ENCODE measurements at regions of chr21 and their contacts with region 1.

Region 1: DNA sequence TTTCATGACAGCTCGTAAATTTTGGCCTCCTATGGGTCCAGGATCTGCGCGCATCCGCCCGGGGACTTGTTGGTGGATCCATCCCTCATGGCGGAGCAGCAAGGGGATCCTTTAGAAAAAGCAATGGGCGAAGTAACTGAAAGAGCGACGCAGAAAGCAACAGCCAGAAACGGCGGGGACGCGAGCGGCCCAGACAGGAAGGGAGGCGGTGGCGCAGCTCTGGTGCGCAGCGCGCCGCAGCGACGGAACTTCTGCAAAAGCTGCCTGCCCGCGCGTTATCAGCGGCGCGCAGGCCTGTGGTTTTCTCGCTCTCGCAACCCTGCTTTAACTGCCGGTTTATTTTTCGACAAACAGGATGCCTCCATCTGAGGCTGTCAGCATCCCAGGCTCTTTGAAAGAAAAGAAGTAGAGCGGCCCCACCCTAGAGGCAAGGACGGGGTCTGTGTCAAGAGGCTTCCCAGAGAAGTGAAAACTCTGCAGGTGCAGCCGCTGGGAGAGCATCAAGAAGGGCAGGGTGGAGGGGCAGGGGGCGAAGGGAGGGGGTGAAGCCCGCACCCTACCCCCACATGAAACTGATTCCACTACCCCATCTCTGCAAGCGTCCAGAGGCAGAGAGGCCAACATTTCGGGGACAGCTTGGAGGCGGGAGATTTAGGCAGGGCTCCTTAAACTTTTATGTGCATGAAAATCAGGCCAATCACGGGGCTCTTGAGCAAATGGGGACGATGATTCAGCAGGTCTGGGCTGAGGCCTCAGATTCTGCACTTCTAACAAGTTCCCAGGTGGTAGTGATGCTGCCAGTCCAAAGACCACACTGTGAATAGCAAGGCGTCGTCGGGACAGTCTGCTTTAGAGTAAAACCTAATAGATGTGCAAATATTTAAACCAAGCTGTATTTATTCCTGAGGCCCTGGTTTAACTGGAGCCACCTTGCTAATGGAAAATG is 22.2 kb downstream of the RUNX1 start:
- DNase-seq: peak; percentile 75 to 96 (median 88)
- ATAC-seq: peak; percentile 83
- H3K4me3 ChIP-seq: peak overlapping the region; percentile 32 to 39
- H3K4me3 Mint-ChIP-seq: peak overlapping the region; percentile 77
- H3K27ac ChIP-seq: peak overlapping the region; percentile 74 to 77
- H3K27ac Mint-ChIP-seq: peak overlapping the region; percentile 97
- H3K4me1 ChIP-seq: peaks cover 80% of the 10 kb centered on the region
- H3K4me1 Mint-ChIP-seq: peaks cover 89% of the 10 kb centered on the region
- H3K27me3 ChIP-seq: no peaks in the 10 kb centered on the region
- H3K27me3 Mint-ChIP-seq: no peaks in the 10 kb centered on the region
- CTCF ChIP-seq: no peak

Region 2: DNA sequence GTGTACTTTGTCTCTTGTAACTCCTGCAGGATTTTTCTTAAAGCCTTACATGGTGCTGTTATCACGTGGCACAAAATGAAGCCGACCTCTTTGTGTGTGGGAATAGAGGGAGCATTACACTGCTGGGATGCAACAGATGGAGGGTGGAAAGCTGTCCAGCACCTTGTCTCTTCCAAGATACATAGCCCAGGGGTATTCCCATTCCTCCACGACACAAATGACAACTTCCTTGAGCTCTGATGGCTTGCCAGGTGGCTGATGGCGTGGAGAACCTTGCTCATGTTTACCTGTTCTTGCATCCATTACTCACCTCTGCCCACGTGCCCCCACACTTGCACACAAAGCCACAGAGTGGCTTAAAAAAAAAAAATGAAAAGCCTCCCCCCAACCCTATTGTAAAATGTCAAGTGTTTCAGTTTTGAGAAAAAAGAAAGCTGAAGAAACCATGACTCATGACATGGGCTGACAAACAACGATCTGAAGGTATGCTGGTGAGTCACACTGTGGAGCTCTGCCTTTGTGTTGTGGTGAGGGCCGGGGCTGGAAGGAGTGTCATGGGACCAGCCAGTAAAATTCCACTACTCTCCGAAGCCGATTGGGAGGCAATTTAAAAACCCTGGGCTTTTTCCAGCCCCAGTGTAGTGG is 1079.3 kb before region 1 on chr21:
- CTCF ChIA-PET with region 1: no interaction called
- POLR2A ChIA-PET with region 1: no interaction called
- intact Hi-C with region 1: loop called in 1 of 2 experiments (anchors 5 kb)
- DNase-seq: peak; percentile 64 to 97 (median 82)
- ATAC-seq: peak; percentile 56
- H3K4me3 ChIP-seq: peak overlapping the region; percentile 18 to 25
- H3K4me3 Mint-ChIP-seq: peak overlapping the region; percentile 75
- H3K27ac ChIP-seq: peak overlapping the region; percentile 94 to 95
- H3K27ac Mint-ChIP-seq: peak overlapping the region; percentile 99
- H3K4me1 ChIP-seq: peaks cover 66% of the 10 kb centered on the region
- H3K4me1 Mint-ChIP-seq: peaks cover 78% of the 10 kb centered on the region
- H3K27me3 ChIP-seq: no peaks in the 10 kb centered on the region
- H3K27me3 Mint-ChIP-seq: no peaks in the 10 kb centered on the region
- CTCF ChIP-seq: no peak

Region 3: DNA sequence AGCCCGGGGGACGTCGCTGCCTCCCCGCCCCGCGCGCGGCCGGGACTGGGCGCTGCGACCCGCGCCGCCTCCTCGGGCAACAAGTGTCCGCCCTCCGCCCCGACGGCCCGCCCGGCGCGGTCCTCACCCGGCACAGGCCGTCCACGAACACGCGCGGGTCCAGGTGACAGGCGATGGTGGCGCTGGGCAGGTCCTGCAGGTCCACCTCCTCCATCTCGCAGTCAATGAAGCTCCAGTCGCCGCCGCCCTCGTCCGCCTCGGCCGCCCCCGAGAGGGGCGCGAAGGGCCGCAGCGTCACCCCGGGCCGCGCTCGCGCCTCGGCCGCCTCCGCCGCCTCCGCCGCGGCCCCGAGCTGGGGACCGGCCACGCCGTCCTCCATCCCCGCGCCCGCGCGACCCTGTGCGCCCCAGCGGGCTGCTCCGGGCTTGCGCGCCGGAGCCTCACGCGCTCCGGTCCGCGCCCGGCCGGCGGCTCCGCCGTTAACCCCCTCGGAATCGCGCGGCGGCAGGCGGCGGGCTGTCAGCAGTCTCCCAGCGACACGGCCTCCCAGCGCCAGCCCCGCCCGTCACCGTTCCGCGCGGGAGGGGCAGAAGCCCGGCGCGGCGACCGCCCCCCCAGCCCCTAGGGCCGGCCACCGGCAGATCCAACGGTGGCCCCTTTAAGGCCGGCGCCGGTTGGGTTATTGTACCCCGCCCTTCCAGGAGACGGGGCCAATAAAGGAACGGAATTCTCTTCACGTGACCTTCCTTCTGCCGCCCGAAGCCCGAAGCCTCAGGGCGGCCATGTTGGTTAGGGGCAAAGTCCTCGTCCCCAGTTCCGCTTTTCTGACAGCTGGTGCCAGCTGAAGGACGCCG is 412.0 kb before region 1 on chr21 and contains the start of gene RCAN1:
- CTCF ChIA-PET with region 1: no interaction called
- POLR2A ChIA-PET with region 1: no interaction called
- intact Hi-C with region 1: loop called in 1 of 2 experiments (anchors 10 kb)
- DNase-seq: peak; percentile 64 to 94 (median 85)
- ATAC-seq: peak; percentile 95
- H3K4me3 ChIP-seq: peak within 1 kb of the TSS; percentile 51 to 63
- H3K4me3 Mint-ChIP-seq: peak within 1 kb of the TSS; percentile 90
- H3K27ac ChIP-seq: peak within 1 kb of the TSS; percentile 41 to 68
- H3K27ac Mint-ChIP-seq: peak within 1 kb of the TSS; percentile 91
- H3K4me1 ChIP-seq: peaks cover 13% of the 10 kb centered on the region
- H3K4me1 Mint-ChIP-seq: peaks cover 21% of the 10 kb centered on the region
- H3K27me3 ChIP-seq: no peaks in the 10 kb centered on the region
- H3K27me3 Mint-ChIP-seq: no peaks in the 10 kb centered on the region
- CTCF ChIP-seq: no peak
- total RNA-seq, gene RCAN1: 0.73 to 1.0 TPM

Region 4: GRCh38 chr21:34986561-34987500 is 40.1 kb before region 1 on chr21:
- CTCF ChIA-PET with region 1: interaction called, 3 read pairs
- POLR2A ChIA-PET with region 1: interaction called, 12 read pairs
- intact Hi-C with region 1: loop called (anchors 1 to 2 kb)
- DNase-seq: peak; percentile 19 to 81 (median 68)
- ATAC-seq: peak; percentile 72
- H3K4me3 ChIP-seq: peak overlapping the region; percentile 3 to 7
- H3K4me3 Mint-ChIP-seq: peak overlapping the region; percentile 63
- H3K27ac ChIP-seq: peak overlapping the region; percentile 15 to 71
- H3K27ac Mint-ChIP-seq: peak overlapping the region; percentile 95
- H3K4me1 ChIP-seq: peaks cover 89% of the 10 kb centered on the region
- H3K4me1 Mint-ChIP-seq: peaks cover 93% of the 10 kb centered on the region
- H3K27me3 ChIP-seq: no peaks in the 10 kb centered on the region
- H3K27me3 Mint-ChIP-seq: no peaks in the 10 kb centered on the region
- CTCF ChIP-seq: no peak

Region 5: GRCh38 chr21:35011681-35012080 is 15.2 kb before region 1 on chr21:
- CTCF ChIA-PET with region 1: interaction called, 5 read pairs
- POLR2A ChIA-PET with region 1: interaction called, 7 read pairs
- intact Hi-C with region 1: loop called in 1 of 2 experiments (anchors 1 kb)
- DNase-seq: no peak
- ATAC-seq: no peak
- H3K4me3 ChIP-seq: no peak overlapping the region
- H3K4me3 Mint-ChIP-seq: peak overlapping the region; percentile 51
- H3K27ac ChIP-seq: no peak overlapping the region
- H3K27ac Mint-ChIP-seq: peak overlapping the region; percentile 84
- H3K4me1 ChIP-seq: peaks cover 69% of the 10 kb centered on the region
- H3K4me1 Mint-ChIP-seq: peaks cover 95% of the 10 kb centered on the region
- H3K27me3 ChIP-seq: no peaks in the 10 kb centered on the region
- H3K27me3 Mint-ChIP-seq: no peaks in the 10 kb centered on the region
- CTCF ChIP-seq: no peak

Region 6: DNA sequence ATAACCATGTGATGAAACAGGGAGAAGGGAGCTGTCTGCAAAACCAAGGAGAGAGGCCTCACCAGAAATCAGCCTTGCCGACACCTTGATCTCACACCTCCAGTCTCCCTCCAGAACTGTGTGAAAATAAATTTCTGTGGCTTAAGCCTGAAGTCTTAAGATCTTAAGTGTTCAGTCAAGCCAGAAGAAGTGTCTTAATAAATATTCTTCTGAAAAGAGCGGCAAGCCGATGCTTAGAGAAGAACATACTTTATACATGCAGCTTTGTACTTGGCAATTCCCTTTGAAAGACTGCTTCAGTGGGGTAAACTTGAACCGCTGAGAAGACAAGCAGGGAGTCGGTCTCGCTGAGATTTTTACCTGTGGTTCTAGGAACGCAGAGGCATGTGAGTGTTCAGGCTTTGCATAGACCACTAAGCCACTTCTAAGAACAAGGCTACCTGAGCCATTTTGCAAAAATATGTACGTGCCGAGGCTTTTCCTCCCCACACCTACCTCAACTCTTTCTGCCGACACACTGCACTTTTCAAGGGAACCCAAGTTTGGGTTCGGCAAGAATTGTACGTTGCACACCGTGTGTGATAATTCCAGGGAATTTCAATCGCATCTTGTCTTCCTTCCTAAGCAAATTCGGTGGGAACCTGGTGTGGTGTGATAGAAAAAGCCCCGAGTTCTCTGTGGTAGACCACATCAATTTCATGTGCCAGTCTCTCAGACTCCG is 18.8 kb after region 1 on chr21:
- CTCF ChIA-PET with region 1: interaction called, 27 read pairs
- POLR2A ChIA-PET with region 1: interaction called, 80 read pairs
- intact Hi-C with region 1: loop called (anchors 1 kb)
- DNase-seq: peak in 7 of 9 experiments; percentile 42 to 91 (median 70)
- ATAC-seq: peak; percentile 31
- H3K4me3 ChIP-seq: peak overlapping the region; percentile 75 to 78
- H3K4me3 Mint-ChIP-seq: peak overlapping the region; percentile 95
- H3K27ac ChIP-seq: peak overlapping the region; percentile 76 to 79
- H3K27ac Mint-ChIP-seq: peak overlapping the region; percentile 97
- H3K4me1 ChIP-seq: peaks cover 69% of the 10 kb centered on the region
- H3K4me1 Mint-ChIP-seq: peaks cover 81% of the 10 kb centered on the region
- H3K27me3 ChIP-seq: no peaks in the 10 kb centered on the region
- H3K27me3 Mint-ChIP-seq: no peaks in the 10 kb centered on the region
- CTCF ChIP-seq: no peak

Region 7: DNA sequence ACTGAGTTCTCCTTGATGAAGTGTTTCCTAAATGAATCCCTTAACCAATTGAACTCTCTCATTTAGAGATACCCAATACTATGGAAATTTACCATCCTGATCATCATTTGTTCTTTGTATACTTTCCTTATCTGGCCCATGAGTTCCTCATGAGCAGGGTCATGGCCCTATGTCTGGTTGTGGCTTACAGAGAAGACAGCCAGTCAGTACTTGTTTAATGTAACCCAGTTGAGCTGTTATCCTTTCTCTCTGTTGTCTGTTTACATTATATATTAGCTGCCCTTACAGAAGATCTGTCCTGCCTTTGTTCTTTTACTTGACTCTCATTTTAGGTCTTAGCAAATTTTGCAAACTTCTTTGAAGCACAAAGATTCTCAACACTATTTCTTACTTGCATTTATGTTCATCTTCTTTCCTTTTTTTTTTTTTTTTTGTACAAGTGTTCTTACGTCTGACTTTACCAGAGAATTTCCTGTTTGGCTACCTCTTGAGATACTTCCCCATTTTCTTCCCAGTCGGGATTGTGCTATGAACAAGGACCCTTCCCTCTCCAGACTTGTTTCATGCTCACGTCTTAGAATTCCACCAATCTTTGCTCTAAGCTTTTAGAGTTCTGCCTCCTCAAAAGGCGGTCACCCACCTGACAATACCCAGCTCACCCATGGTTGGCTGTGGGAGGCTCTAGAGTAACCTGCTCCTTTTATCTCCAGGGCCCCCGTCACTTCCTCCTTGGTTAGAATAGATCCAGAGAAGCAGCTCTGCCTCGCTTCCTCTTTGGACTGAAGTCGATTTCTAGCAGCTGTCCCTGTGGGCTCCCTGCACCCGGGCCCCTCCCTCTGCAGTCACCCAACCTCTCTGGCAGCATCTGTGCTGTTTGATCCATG is 75.8 kb after region 1 on chr21:
- CTCF ChIA-PET with region 1: no interaction called
- POLR2A ChIA-PET with region 1: no interaction called
- intact Hi-C with region 1: no loop called
- DNase-seq: peak in 8 of 9 experiments; percentile 7 to 73 (median 42)
- ATAC-seq: peak; percentile 98
- H3K4me3 ChIP-seq: no peak overlapping the region
- H3K4me3 Mint-ChIP-seq: no peak overlapping the region
- H3K27ac ChIP-seq: no peak overlapping the region
- H3K27ac Mint-ChIP-seq: no peak overlapping the region
- H3K4me1 ChIP-seq: peaks cover 17% of the 10 kb centered on the region
- H3K4me1 Mint-ChIP-seq: no peaks in the 10 kb centered on the region
- H3K27me3 ChIP-seq: no peaks in the 10 kb centered on the region
- H3K27me3 Mint-ChIP-seq: no peaks in the 10 kb centered on the region
- CTCF ChIP-seq: no peak

Region 8: GRCh38 chr21:35189077-35189863 is 162.4 kb after region 1 on chr21:
- CTCF ChIA-PET with region 1: no interaction called
- POLR2A ChIA-PET with region 1: no interaction called
- intact Hi-C with region 1: no loop called
- DNase-seq: no peak
- ATAC-seq: no peak
- H3K4me3 ChIP-seq: no peak overlapping the region
- H3K4me3 Mint-ChIP-seq: no peak overlapping the region
- H3K27ac ChIP-seq: no peak overlapping the region
- H3K27ac Mint-ChIP-seq: no peak overlapping the region
- H3K4me1 ChIP-seq: no peaks in the 10 kb centered on the region
- H3K4me1 Mint-ChIP-seq: no peaks in the 10 kb centered on the region
- H3K27me3 ChIP-seq: no peaks in the 10 kb centered on the region
- H3K27me3 Mint-ChIP-seq: peaks cover 3% of the 10 kb centered on the region
- CTCF ChIP-seq: no peak